Left ventricle myocardium inferior (tissue), 1 donor: ENCODE measurements at regions of chr2 and their contacts with region 1.

Region 1: DNA sequence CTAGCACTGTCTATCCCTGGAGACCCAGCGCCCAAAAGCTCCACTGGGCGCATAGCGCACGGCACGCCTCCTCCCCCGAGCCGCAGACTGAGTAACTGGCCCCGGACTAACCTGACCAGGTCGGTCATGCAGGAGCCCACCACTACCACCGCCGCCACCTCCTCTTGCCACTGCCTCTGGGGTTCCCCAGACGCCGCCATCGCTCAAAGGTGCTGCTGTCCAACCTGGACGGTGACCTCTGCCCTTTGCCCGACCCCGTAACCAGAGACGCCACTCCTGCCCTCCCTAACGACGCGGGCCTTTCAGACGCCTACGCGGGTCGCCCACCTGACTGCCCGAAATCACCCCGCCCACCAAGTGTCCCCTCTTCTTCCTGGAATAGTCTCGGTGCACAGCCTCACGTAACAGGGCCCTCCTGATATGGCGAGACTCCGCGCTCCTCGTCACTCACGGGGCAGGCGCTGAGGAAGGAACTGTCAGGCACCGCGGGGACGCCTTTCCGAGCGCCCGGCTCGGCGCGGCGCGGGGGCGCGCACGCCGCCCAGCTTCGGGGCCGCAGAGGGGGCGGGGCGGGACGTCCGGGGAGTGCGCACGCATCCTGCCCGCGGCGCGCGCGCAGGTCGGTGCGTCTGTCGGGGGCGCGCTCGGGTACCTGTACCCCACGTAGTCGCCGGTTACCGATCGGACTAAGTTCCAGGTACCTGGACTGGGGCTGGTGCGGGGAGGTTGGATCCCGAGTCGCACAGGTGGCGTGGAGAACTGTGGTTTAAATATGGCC is at the starts of genes BABAM2 and RBKS:
- DNase-seq: peak; percentile 88
- H3K4me3 ChIP-seq: peak within 1 kb of the TSS; percentile 77
- H3K27ac ChIP-seq: peak within 1 kb of the TSS; percentile 92
- H3K4me1 ChIP-seq: peaks cover 53% of the 10 kb centered on the region
- H3K27me3 ChIP-seq: no peaks in the 10 kb centered on the region
- CTCF ChIP-seq: no peak
- total RNA-seq, gene BABAM2: 58.9 TPM
- total RNA-seq, gene RBKS: 2.7 TPM

Region 2: GRCh38 chr2:28395334-28396061 is 505.2 kb after region 1 on chr2:
- intact Hi-C with region 1: loop called (anchors 2 kb)
- DNase-seq: peak; percentile 46
- H3K4me3 ChIP-seq: peak overlapping the region; percentile 84
- H3K27ac ChIP-seq: peak overlapping the region; percentile 100
- H3K4me1 ChIP-seq: peaks cover 82% of the 10 kb centered on the region
- H3K27me3 ChIP-seq: no peaks in the 10 kb centered on the region
- CTCF ChIP-seq: no peak